Calu3 (cell line): ENCODE measurements at regions of chr20 and their contacts with region 1.

Region 1: DNA sequence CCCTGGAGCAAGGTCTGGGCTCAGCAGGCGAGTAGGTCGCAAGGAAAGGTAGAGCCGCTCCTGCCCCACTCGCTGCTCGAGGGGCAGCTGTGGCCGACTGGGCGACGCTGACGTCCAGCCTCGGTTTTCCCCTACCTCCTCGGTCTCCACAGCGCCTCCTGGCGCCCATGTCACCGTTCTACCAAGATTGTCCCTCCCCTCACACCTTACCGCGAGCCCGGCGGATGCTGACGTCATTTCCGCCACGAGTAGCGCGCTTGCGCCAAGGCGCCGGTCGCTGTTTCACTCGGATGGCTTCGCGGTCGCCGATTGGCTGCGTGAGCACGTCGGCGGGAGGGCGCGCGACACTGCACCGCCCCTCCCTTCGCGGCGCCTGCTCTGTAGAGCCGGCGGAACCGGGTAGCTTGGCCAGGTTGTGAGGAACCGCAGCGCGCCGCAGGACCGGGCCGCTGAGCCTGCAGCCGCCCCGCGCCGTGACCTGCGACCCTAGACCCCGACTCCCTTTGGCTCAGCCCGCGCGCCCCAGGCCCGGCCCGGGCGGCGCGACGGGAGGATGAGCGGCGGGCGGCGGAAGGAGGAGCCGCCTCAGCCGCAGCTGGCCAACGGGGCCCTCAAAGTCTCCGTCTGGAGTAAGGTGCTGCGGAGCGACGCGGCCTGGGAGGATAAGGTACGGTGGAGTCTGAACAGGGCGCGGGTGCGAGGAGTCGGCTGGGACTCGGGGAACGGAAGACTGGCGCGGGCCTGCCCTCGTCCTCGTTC is at the start of gene RAB5IF:
- DNase-seq: peak; percentile 100
- H3K4me3 Mint-ChIP-seq: peak within 1 kb of the TSS; percentile 99
- H3K27ac Mint-ChIP-seq: peak within 1 kb of the TSS; percentile 91
- H3K4me1 Mint-ChIP-seq: peaks cover 33% of the 10 kb centered on the region
- H3K27me3 Mint-ChIP-seq: peaks cover 14% of the 10 kb centered on the region
- CTCF ChIP-seq: peak; percentile 93
- total RNA-seq, gene RAB5IF: 235 and 250 TPM in 2 replicates

Region 2: GRCh38 chr20:36550797-36551299 is 54.7 kb before region 1 on chr20:
- CTCF ChIA-PET with region 1: no interaction called
- intact Hi-C with region 1: loop called (anchors 5 kb)
- DNase-seq: no peak
- H3K4me3 Mint-ChIP-seq: no peak overlapping the region
- H3K27ac Mint-ChIP-seq: no peak overlapping the region
- H3K4me1 Mint-ChIP-seq: no peaks in the 10 kb centered on the region
- H3K27me3 Mint-ChIP-seq: peaks cover 12% of the 10 kb centered on the region
- CTCF ChIP-seq: no peak

Region 3: GRCh38 chr20:36573103-36573794 is 32.3 kb before region 1 on chr20 and contains the start of gene TGIF2:
- CTCF ChIA-PET with region 1: interaction called, 14 read pairs
- intact Hi-C with region 1: no loop called
- DNase-seq: peak; percentile 97
- H3K4me3 Mint-ChIP-seq: peak within 1 kb of the TSS; percentile 77
- H3K27ac Mint-ChIP-seq: peak within 1 kb of the TSS; percentile 76
- H3K4me1 Mint-ChIP-seq: peaks cover 28% of the 10 kb centered on the region
- H3K27me3 Mint-ChIP-seq: no peaks in the 10 kb centered on the region
- CTCF ChIP-seq: no peak
- total RNA-seq, gene TGIF2: 39.4 and 48.9 TPM in 2 replicates

Region 4: DNA sequence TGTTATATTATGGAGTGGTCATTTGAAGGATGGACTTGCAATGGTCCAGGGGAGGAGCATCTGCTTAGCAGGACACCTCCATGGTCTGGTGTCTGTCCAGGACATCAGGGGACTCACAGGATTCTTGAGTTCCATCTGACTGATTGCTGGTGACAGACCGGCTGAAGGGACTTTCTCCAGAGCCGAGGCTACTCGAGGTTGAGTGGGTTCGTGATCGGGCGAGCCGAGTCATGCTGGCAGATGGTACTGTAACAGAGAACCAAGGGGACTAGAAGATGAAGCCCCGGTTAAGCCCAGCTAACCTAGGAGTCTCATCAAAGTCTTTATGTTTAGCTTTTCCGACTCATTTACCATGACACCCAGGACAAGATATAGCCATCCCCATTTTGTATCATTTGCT is 47.9 kb after region 1 on chr20:
- CTCF ChIA-PET with region 1: no interaction called
- intact Hi-C with region 1: no loop called
- DNase-seq: no peak
- H3K4me3 Mint-ChIP-seq: no peak overlapping the region
- H3K27ac Mint-ChIP-seq: no peak overlapping the region
- H3K4me1 Mint-ChIP-seq: no peaks in the 10 kb centered on the region
- H3K27me3 Mint-ChIP-seq: no peaks in the 10 kb centered on the region
- CTCF ChIP-seq: no peak

Region 5: GRCh38 chr20:36676701-36677421 is 71.3 kb after region 1 on chr20:
- CTCF ChIA-PET with region 1: interaction called, 10 read pairs
- intact Hi-C with region 1: no loop called
- DNase-seq: no peak
- H3K4me3 Mint-ChIP-seq: no peak overlapping the region
- H3K27ac Mint-ChIP-seq: no peak overlapping the region
- H3K4me1 Mint-ChIP-seq: no peaks in the 10 kb centered on the region
- H3K27me3 Mint-ChIP-seq: no peaks in the 10 kb centered on the region
- CTCF ChIP-seq: no peak

Region 6: GRCh38 chr20:36728986-36729385 is 123.4 kb after region 1 on chr20:
- CTCF ChIA-PET with region 1: interaction called, 11 read pairs
- intact Hi-C with region 1: no loop called
- DNase-seq: peak; percentile 21
- H3K4me3 Mint-ChIP-seq: no peak overlapping the region
- H3K27ac Mint-ChIP-seq: no peak overlapping the region
- H3K4me1 Mint-ChIP-seq: peaks cover 3% of the 10 kb centered on the region
- H3K27me3 Mint-ChIP-seq: no peaks in the 10 kb centered on the region
- CTCF ChIP-seq: peak; percentile 34